GM23248 (cell line): ENCODE measurements at regions of chr2 and their contacts with region 1.

Region 1: DNA sequence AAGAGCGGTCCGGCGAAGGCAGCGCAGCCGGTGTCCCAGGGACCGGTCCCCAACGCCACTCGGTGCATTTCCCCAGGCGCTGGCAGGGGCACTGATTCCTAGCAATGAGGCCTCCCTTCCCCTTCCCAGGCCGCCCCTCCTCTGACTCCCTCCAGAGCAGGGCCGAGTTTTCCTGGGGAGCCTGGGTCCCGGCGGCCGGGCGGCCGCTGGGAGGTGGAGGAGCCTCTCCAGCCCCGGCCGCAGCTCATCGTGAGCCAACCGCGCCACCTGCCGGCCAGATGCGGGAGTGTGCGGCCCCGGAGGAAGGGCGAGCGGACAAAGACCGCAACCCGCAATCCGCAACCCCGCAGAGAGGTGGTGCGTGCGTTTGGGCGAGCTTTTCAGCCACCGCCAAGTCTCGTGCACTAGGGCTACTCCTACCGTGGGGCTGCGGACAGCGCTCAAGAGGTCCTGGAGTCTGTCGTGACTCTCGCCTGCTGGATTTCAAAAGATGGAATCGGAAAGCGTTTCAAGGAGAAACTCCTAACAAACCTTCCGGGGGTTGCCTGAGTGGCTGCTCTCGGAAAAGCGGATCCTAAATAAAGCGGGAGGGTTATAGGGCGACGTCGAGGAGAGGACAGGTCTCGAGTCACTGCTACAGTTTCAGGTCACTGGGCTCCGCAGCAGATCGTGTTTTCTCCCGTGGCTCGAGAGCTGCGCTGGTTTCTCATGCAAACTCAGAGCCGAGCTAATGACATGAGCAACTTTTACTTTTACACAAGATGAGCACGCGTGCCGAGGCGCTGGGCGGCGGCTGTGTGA is 1.5 kb upstream of the EPHA4 start:
- DNase-seq: peak; percentile 92
- H3K4me3 ChIP-seq: peak overlapping the region; percentile 92
- H3K27ac ChIP-seq: peak overlapping the region; percentile 45
- H3K4me1 ChIP-seq: peaks cover 6% of the 10 kb centered on the region; the same call in 1 of the 2 replicates
- H3K27me3 ChIP-seq: no peaks in the 10 kb centered on the region

Region 2: DNA sequence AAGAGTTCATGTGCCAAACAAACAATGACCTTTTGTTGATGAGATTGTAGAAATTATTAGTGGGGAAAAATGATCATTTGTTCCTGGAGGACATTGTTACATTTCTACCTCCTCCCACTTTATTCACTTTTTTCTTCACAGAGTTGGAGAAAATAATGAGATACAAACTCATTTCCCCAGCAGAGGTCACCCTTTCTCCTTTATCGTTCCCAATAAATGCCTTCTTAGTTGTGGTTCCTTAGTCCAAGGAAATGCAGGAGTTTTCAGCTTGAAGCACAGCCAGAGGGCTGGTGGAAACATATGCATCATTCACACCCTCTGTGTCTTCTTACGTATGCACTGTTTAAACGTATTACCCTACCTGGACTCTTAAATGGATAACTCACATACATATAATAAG is 1837.4 kb before region 1 on chr2:
- in situ Hi-C with region 1: loop called (anchors 25 kb)
- DNase-seq: peak; percentile 86
- H3K4me3 ChIP-seq: no peak overlapping the region
- H3K27ac ChIP-seq: no peak overlapping the region
- H3K4me1 ChIP-seq: no peaks in the 10 kb centered on the region; the same call in 1 of the 2 replicates
- H3K27me3 ChIP-seq: peaks cover 2% of the 10 kb centered on the region

Region 3: DNA sequence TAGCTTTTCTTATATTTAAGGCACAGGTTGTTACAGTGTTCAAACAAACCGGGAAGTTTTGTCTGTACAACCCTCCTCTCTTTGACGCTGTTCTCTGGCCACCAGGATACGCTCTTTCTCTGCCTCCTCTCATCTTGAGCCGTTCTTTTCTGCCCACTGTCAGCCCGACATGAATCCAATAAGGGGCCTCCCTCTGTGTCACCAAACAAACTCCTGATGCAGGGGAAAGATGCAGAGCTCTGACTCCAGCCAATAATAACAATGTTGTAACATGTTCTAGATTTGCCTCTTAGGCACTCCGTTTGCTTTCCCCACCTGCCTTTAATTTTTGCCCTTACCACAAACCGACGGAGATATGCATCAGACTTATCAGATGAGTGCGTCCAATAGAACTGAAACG is 1496.9 kb before region 1 on chr2:
- in situ Hi-C with region 1: loop called (anchors 25 kb)
- DNase-seq: peak; percentile 87
- H3K4me3 ChIP-seq: peak overlapping the region; percentile 54
- H3K27ac ChIP-seq: peak overlapping the region; percentile 85
- H3K4me1 ChIP-seq: peaks cover 25% of the 10 kb centered on the region
- H3K27me3 ChIP-seq: no peaks in the 10 kb centered on the region

Region 4: GRCh38 chr2:220687231-220687843 is 886.3 kb before region 1 on chr2:
- in situ Hi-C with region 1: loop called (anchors 10 kb)
- DNase-seq: peak; percentile 86
- H3K4me3 ChIP-seq: no peak overlapping the region
- H3K27ac ChIP-seq: no peak overlapping the region
- H3K4me1 ChIP-seq: 0 out of 2 replicates have a peak, but pooled peaks cover 4% of the 10 kb centered on the region
- H3K27me3 ChIP-seq: no peaks in the 10 kb centered on the region